Activated CD4-positive, alpha-beta T cell treated with anti-CD3 and anti-CD28 coated beads, Interleukin-2, amount 10 ng/mL, durations not matched to agents 24 days and 14 days (primary cell): ENCODE measurements at regions of chr3 and their contacts with region 1.

Region 1: GRCh38 chr3:63967675-63968611 is 55.4 kb downstream of the PSMD6 start:
- DNase-seq: peak; percentile 82
- H3K4me3 Mint-ChIP-seq: peak overlapping the region; percentile 87
- H3K27ac Mint-ChIP-seq: peak overlapping the region; percentile 96
- H3K4me1 Mint-ChIP-seq: peaks cover 80% of the 10 kb centered on the region
- H3K27me3 Mint-ChIP-seq: no peaks in the 10 kb centered on the region

Region 2: GRCh38 chr3:63979093-63979885 is 11.3 kb after region 1 on chr3:
- intact Hi-C with region 1: loop called (anchors 1 kb)
- DNase-seq: peak; percentile 66
- H3K4me3 Mint-ChIP-seq: peak overlapping the region; percentile 77
- H3K27ac Mint-ChIP-seq: peak overlapping the region; percentile 87
- H3K4me1 Mint-ChIP-seq: peaks cover 61% of the 10 kb centered on the region
- H3K27me3 Mint-ChIP-seq: no peaks in the 10 kb centered on the region

Region 3: DNA sequence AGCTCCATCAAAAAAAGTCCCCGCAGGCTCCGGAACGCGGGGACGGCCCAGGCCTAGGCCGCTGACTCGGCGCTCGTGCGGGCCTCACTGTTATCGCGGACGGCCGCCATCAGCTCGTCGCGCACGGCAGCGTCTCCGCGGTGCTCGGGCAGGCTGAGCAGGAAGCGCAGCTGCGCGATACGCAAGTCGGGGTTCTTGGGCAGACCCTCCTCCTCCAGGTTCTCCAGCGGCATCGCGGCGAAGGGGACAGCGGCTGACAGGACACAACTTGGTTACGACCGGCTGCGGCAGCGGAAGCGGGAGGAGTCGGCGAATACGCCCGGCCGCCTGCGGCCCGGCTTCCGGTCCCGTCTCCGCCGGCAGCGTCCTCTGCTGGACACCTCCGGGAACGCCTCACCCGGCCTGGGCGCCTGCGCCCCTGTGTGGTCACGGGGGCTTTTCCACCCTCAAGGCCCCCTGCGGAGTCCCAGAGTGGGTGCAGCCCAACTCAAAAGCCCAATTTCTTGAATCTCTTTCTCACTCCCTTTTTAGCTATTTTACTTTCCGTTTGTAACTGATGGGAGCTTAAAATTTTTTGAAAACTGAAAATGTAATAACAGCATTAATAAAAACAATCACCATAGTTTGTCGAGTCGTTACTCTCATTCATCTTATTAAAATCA is 55.4 kb after region 1 on chr3 and contains the start of gene PSMD6:
- intact Hi-C with region 1: loop called (anchors 2 kb)
- DNase-seq: peak; percentile 99
- H3K4me3 Mint-ChIP-seq: peak within 1 kb of the TSS; percentile 79
- H3K27ac Mint-ChIP-seq: peak within 1 kb of the TSS; percentile 92
- H3K4me1 Mint-ChIP-seq: peaks cover 19% of the 10 kb centered on the region
- H3K27me3 Mint-ChIP-seq: peaks cover 13% of the 10 kb centered on the region
- total RNA-seq, gene PSMD6: 141 and 146 TPM in 2 replicates

Region 4: DNA sequence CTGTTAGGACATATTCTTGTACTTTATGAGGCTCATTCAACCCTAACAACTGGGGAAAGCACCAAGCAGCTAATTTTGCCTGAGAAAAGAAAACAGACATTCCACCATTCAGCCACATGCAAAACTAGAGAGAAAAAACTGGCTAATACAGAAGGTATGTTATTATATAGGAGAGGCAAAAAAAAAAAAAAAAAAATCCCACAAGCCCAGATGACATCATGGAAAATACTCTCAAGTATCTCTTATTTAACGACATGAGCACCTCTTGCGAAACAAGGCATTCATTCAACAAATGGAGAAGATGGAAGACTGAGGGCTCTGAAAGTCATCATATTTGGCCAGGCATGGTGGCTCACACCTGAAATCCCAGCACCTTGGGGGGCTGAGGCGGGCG is 195.8 kb after region 1 on chr3:
- intact Hi-C with region 1: no loop called
- DNase-seq: no peak
- H3K4me3 Mint-ChIP-seq: no peak overlapping the region
- H3K27ac Mint-ChIP-seq: no peak overlapping the region
- H3K4me1 Mint-ChIP-seq: no peaks in the 10 kb centered on the region
- H3K27me3 Mint-ChIP-seq: no peaks in the 10 kb centered on the region